ENCODE measurements at regions of chr3 and their contacts with region 1.

Region 1: GRCh38 chr3:193457526-193457925 is 79.0 kb upstream of the ATP13A5 start:
- DNase-seq: no peak
- ATAC-seq: no peak
- H3K4me3 Mint-ChIP-seq: no peak overlapping the region
- H3K27ac Mint-ChIP-seq: no peak overlapping the region
- H3K4me1 Mint-ChIP-seq: no peaks in the 10 kb centered on the region
- H3K27me3 Mint-ChIP-seq: no peaks in the 10 kb centered on the region

Region 2: DNA sequence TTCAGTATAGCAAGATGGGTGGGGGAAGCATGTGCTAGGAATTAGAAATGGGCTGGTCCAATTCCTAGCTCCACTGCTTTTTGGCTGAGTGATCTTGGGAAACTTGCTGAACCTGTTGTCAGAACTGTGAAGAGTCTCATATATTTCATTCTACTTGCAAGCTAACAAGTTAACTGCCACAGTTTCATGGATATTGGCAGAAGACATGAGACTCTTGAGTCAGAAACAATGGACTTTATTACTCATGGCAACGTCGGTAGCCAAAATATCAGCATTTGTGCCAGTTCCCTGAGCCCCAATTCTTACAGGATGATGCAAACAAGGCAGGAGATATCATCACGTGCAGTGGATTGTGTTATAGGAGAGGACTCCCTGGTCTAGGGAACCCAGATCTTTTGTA is 243.1 kb before region 1 on chr3:
- CTCF ChIA-PET with region 1: no interaction called
- POLR2A ChIA-PET with region 1: no interaction called
- DNase-seq: no peak
- ATAC-seq: no peak
- H3K4me3 Mint-ChIP-seq: no peak overlapping the region
- H3K27ac Mint-ChIP-seq: no peak overlapping the region
- H3K4me1 Mint-ChIP-seq: no peaks in the 10 kb centered on the region
- H3K27me3 Mint-ChIP-seq: no peaks in the 10 kb centered on the region

Region 3: DNA sequence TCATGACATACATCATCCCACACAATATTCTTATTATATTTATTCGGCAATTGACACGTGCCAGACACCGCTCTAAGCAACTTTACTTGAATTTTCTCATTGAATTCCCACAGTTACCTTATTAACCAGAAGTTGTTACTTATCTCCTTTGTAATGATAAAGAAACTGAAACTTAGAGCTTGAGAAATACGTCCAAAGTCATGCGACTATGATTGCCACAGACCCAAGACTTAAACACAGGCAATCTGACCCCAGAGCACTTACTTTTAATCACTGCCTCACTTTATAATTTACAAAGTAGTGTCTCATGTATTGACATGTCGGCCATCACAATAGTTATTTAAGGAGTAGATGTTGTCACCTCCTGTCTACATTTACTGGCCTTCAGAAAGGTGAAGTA is 32.4 kb after region 1 on chr3:
- CTCF ChIA-PET with region 1: no interaction called
- POLR2A ChIA-PET with region 1: no interaction called
- DNase-seq: no peak
- ATAC-seq: no peak
- H3K4me3 Mint-ChIP-seq: no peak overlapping the region
- H3K27ac Mint-ChIP-seq: no peak overlapping the region
- H3K4me1 Mint-ChIP-seq: peaks cover 3% of the 10 kb centered on the region
- H3K27me3 Mint-ChIP-seq: no peaks in the 10 kb centered on the region

Region 4: DNA sequence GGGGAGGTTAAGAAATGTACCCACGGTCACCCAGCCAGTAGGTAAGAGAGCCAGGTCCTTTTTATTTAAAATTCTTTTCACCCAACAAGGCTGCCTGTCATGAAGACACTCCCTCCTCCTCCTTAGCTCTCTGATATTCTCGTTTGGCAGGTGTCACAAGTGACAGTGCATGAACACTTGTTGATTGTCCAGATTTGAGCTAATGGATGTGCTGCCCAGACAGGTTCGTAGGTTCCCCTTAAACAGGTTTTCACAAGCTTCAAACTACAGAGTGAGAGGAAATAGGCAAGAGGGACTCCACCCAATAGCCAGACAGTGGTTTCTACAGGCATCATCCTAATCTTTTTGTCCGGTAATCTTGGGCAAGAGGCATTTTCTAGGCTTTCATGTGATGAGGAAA is 64.9 kb after region 1 on chr3:
- CTCF ChIA-PET with region 1: no interaction called
- POLR2A ChIA-PET with region 1: no interaction called
- DNase-seq: no peak
- ATAC-seq: no peak
- H3K4me3 Mint-ChIP-seq: no peak overlapping the region
- H3K27ac Mint-ChIP-seq: no peak overlapping the region
- H3K4me1 Mint-ChIP-seq: no peaks in the 10 kb centered on the region
- H3K27me3 Mint-ChIP-seq: peaks cover 3% of the 10 kb centered on the region

Region 5: GRCh38 chr3:193572426-193572908 is 114.9 kb after region 1 on chr3:
- CTCF ChIA-PET with region 1: interaction called, 14 read pairs
- POLR2A ChIA-PET with region 1: no interaction called
- DNase-seq: peak; percentile 65
- ATAC-seq: no peak
- H3K4me3 Mint-ChIP-seq: no peak overlapping the region
- H3K27ac Mint-ChIP-seq: no peak overlapping the region
- H3K4me1 Mint-ChIP-seq: no peaks in the 10 kb centered on the region
- H3K27me3 Mint-ChIP-seq: no peaks in the 10 kb centered on the region

Measured in activated CD8-positive, alpha-beta T cell treated with anti-CD3 and anti-CD28 coated beads, Interleukin-2, amount 10 ng/mL, durations not matched to agents 7 days and 5 days (primary cell).